GM13977 (cell line): ENCODE measurements at regions of chr4 and their contacts with region 1.

Region 1: DNA sequence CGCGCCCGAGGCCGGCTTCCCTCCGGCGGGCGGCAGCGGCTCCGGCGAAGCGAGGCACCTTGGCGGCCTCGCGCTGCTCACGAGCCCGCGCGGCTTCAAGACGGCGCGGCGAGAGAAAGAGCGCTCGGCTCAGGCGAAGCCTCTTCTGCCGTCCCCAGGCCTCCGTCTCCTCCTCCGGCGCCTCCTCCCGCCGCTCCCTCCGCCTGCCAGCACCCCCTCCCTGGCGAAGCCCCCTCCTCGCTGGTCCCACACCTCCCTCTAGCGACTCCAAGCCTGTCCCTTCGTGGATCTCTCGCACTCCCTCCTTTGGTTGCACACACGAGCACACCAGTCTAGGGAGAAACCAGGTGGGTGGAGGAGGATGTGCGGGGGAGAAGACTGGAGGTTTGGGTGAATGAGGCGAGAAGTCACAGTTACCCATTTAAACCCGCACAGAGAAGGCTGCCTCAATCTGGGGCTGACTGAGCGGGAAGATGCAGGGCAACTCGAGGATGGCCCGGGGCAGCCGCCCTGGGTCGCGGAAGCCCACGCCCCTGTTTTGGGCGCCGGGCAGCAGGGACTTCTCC is at the start of gene CAMK2D:
- DNase-seq: peak; percentile 82
- CTCF ChIP-seq: peak; percentile 86

Region 2: DNA sequence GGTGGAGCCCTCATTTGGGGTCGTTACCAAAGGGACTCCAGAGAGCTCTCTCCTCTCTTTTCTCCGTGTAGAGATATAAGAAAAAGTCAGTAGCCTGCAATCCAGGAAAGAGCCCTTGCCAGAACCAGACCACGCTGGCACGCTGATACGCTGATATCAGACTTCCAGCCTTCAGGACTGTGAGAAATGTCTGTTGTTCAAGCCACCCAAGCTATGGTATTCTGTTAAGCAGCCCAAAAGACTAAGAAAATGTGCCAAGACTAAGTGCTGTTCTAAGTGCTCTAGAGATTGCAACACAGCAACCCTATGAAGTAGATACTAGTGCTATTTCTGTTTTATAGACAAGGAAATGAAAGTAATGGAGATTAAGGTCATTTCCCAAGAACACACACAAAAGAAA is 205.8 kb before region 1 on chr4:
- in situ Hi-C with region 1: loop called (anchors 10 kb)
- DNase-seq: no peak
- CTCF ChIP-seq: no peak

Region 3: DNA sequence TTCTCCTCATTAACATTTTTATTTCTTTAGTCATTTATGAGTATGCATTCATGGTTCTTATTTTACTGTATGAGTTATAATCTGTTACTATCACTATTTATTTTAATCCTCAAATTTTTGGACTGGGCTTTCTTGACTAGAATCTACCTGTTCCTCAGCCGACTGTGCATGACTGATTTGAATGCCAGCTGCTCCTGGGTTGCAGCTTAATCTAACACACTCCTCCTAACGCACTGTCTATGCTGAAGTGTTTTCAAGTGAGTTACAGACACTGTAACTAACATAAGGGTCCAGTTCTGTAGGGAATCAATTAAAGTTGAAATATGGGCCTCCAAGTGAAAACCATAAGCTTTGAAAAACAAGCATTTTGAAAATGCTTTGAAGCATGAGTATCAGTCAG is 355.2 kb after region 1 on chr4:
- in situ Hi-C with region 1: no loop called
- DNase-seq: no peak
- CTCF ChIP-seq: no peak

Region 4: GRCh38 chr4:114343015-114343414 is 581.3 kb after region 1 on chr4:
- in situ Hi-C with region 1: no loop called
- DNase-seq: no peak
- CTCF ChIP-seq: no peak

Region 5: GRCh38 chr4:114807759-114808404 is 1046.2 kb after region 1 on chr4:
- in situ Hi-C with region 1: no loop called
- DNase-seq: peak; percentile 34
- CTCF ChIP-seq: peak; percentile 95